Activated CD8-positive, alpha-beta T cell treated with anti-CD3 and anti-CD28 coated beads, Interleukin-2, amount 10 ng/mL, durations not matched to agents 7 days and 5 days (primary cell): ENCODE measurements at regions of chr5 and their contacts with region 1.

Region 1: GRCh38 chr5:157148734-157149615 is 6.3 kb upstream of the MED7 start:
- DNase-seq: peak; percentile 90
- ATAC-seq: peak; percentile 75
- H3K4me3 Mint-ChIP-seq: no peak overlapping the region
- H3K27ac Mint-ChIP-seq: no peak overlapping the region
- H3K4me1 Mint-ChIP-seq: peaks cover 54% of the 10 kb centered on the region
- H3K27me3 Mint-ChIP-seq: no peaks in the 10 kb centered on the region

Region 2: GRCh38 chr5:157121709-157122108 is 27.3 kb before region 1 on chr5:
- CTCF ChIA-PET with region 1: no interaction called
- POLR2A ChIA-PET with region 1: no interaction called
- DNase-seq: no peak
- ATAC-seq: no peak
- H3K4me3 Mint-ChIP-seq: no peak overlapping the region
- H3K27ac Mint-ChIP-seq: no peak overlapping the region
- H3K4me1 Mint-ChIP-seq: peaks cover 5% of the 10 kb centered on the region
- H3K27me3 Mint-ChIP-seq: no peaks in the 10 kb centered on the region

Region 3: GRCh38 chr5:157172403-157172802 is 23.4 kb after region 1 on chr5:
- CTCF ChIA-PET with region 1: interaction called, 28 read pairs
- POLR2A ChIA-PET with region 1: interaction called, 24 read pairs
- DNase-seq: peak; percentile 88
- ATAC-seq: peak; percentile 97
- H3K4me3 Mint-ChIP-seq: peak overlapping the region; percentile 60
- H3K27ac Mint-ChIP-seq: peak overlapping the region; percentile 90
- H3K4me1 Mint-ChIP-seq: peaks cover 81% of the 10 kb centered on the region
- H3K27me3 Mint-ChIP-seq: no peaks in the 10 kb centered on the region

Region 4: GRCh38 chr5:157189223-157189622 is 40.2 kb after region 1 on chr5:
- CTCF ChIA-PET with region 1: interaction called, 162 read pairs
- POLR2A ChIA-PET with region 1: interaction called, 106 read pairs
- DNase-seq: peak; percentile 41
- ATAC-seq: no peak
- H3K4me3 Mint-ChIP-seq: peak overlapping the region; percentile 99
- H3K27ac Mint-ChIP-seq: peak overlapping the region; percentile 82
- H3K4me1 Mint-ChIP-seq: peaks cover 79% of the 10 kb centered on the region
- H3K27me3 Mint-ChIP-seq: no peaks in the 10 kb centered on the region

Region 5: DNA sequence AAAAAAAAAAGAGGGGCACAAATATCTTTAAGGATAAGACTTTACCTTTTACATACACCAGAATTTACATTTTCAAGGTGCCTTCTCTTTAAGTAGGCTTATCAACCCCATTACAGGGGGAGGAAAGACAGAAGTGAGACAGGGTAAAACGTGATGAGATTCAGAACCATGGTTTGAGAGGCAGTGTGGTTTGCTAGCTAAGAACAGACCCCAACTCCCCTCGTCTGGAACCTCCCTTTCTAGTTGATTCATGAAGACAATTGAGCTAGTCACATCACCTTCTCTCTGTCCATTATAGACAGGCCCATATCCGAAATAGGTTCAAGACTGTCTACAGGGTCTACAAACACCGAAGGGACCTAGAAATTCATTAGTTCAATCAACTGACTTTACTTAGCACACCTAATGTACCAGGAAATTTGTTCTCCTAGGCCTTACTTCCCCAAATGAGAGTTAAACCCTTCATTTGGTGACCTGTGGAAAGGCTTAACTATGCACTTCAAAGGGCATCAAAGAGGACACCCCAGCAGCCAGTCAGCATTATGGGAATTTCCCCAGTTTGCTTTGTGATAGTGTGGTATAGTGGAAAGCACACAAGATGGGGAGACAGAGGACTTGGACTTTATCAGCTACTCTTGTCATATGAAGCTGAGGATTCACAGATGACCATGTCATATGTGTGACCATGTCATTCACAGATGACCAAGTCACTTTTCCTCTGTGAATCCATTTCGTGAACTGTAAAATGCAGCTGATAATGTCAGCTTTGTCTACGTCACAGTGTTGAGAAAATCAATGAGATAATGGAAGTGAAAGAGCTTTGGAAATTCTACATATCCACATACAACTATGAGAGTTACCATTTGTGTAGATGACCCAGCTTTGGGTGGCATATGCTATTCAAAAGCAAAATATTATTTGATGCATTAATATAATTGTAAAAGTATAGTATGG is 76.8 kb after region 1 on chr5:
- CTCF ChIA-PET with region 1: interaction called, 16 read pairs
- POLR2A ChIA-PET with region 1: interaction called, 3 read pairs
- DNase-seq: no peak
- ATAC-seq: no peak
- H3K4me3 Mint-ChIP-seq: no peak overlapping the region
- H3K27ac Mint-ChIP-seq: peak overlapping the region; percentile 74
- H3K4me1 Mint-ChIP-seq: peaks cover 70% of the 10 kb centered on the region
- H3K27me3 Mint-ChIP-seq: no peaks in the 10 kb centered on the region

Region 6: DNA sequence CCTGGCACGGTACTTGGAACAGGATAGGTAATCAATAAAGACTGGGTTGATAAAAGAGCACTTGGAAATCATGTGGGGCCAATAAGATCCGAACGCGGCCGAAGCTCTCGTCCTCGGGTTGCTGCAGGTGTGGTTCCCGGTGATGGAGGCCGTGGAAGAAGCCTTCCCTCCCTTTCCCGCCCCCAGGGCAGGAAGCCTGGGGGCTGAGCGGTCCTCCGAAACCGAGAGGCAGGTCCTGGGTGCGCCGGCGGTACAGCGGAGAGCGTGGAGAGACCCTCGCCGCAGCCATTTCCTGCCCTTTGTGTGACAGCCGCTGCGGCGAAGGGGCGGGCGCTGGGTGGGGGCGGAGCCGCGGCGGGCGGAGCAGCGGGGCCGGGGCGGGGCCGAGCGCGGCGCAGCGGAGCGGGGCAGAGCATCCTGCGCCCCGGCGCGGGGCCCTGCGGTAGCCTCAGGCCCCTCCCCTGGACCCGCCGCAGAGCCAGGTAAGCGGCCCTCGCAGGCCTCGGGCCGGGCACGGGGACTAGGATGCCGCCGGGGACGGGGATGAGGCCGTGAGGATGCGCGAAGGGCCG is 116.8 kb after region 1 on chr5 and contains the start of gene CYFIP2:
- CTCF ChIA-PET with region 1: interaction called, 10 read pairs
- POLR2A ChIA-PET with region 1: no interaction called
- DNase-seq: peak; percentile 91
- ATAC-seq: peak; percentile 84
- H3K4me3 Mint-ChIP-seq: peak within 1 kb of the TSS; percentile 89
- H3K27ac Mint-ChIP-seq: peak within 1 kb of the TSS; percentile 99
- H3K4me1 Mint-ChIP-seq: peaks cover 62% of the 10 kb centered on the region
- H3K27me3 Mint-ChIP-seq: no peaks in the 10 kb centered on the region
- total RNA-seq, gene CYFIP2: 512 to 516 TPM

Region 7: GRCh38 chr5:157312492-157312891 is 163.5 kb after region 1 on chr5:
- CTCF ChIA-PET with region 1: interaction called, 24 read pairs
- POLR2A ChIA-PET with region 1: no interaction called
- DNase-seq: peak; percentile 74
- ATAC-seq: peak; percentile 92
- H3K4me3 Mint-ChIP-seq: no peak overlapping the region
- H3K27ac Mint-ChIP-seq: peak overlapping the region; percentile 63
- H3K4me1 Mint-ChIP-seq: peaks cover 32% of the 10 kb centered on the region
- H3K27me3 Mint-ChIP-seq: no peaks in the 10 kb centered on the region